Lower leg skin (tissue), 4 donors: ENCODE measurements at regions of chr14 and their contacts with region 1.

Region 1: GRCh38 chr14:89915114-89915878 is 39.2 kb downstream of the EFCAB11 start:
- DNase-seq: peak; percentile 73 to 87
- H3K4me3 ChIP-seq: no peak overlapping the region
- CTCF ChIP-seq: peak in 1 of 3 donors; percentile 75
- POLR2A ChIP-seq: no peak

Region 2: DNA sequence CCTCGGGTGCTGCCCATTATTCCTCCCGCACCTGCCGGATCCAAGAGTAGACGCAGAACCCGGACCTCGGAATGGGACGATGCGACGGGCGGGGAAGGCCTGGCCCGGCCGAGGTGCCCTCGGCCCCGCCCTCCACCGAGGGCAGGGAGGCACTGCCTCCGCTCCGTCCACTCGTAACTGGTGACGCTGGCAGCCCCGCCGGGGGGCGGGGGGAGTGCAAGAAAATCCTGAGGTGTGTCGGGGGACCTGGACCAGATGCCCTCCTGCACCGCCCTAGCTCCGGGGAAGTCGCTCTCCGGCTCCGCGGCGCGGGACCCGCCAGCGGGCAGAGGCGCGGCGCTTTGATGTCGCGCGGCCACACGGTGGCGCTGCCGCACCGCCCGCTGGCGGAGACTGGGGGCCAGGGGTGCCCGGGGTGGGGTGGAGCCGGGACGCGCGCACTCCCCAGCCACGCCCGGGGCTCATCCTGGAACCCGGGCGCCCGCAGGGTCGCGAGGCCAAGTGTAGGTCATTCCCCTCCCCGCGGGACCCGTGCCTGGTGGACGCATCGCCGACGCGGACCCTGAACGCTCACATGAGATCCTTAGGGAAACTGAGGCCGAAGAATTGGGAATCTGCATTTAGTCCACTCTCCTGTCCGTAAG is 888.1 kb before region 1 on chr14:
- intact Hi-C with region 1: loop called (anchors 1 kb)
- DNase-seq: peak in 1 of 2 donors; percentile 87
- H3K4me3 ChIP-seq: peak overlapping the region; percentile 19
- CTCF ChIP-seq: no peak
- POLR2A ChIP-seq: no peak

Region 3: DNA sequence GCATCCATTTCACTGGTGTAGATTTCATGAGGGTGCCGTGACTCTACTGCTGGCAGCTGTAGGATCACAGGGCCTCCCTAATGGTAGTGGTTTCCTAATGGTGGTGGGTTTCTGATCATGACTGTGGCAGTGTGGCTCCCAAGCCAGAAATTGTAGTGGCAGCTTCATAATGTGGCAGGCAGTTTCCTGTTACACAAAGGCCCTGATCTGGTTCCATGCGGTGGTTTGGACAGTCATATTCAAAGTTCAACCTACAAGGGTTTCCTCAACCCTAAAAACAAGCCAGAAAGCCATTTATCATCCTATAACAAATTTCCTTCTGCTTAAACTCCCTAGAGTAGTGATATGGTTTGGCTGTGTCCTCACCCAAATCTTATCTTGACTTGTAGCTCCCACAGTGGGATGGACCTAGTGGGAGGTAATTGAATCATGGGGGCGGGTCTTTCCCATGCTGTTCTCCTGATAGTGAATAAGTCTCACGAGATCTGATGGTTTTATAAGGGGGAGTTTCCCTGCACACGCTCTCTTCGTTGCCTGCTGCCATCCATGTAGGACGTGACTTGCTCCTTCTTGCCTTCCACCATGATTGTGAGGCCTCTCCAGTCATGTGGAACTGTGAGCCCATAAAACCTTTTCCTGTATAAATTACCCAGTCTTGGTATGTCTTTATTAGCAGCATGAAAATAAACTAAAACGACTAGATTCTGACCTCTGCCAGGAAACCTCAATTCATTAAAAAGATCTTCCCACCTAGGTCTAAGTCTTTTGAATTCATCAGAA is 217.8 kb before region 1 on chr14:
- intact Hi-C with region 1: no loop called
- DNase-seq: no peak
- H3K4me3 ChIP-seq: no peak overlapping the region
- CTCF ChIP-seq: no peak
- POLR2A ChIP-seq: no peak